PC-9 (cell line): ENCODE measurements at regions of chr11 and their contacts with region 1.

Region 1: DNA sequence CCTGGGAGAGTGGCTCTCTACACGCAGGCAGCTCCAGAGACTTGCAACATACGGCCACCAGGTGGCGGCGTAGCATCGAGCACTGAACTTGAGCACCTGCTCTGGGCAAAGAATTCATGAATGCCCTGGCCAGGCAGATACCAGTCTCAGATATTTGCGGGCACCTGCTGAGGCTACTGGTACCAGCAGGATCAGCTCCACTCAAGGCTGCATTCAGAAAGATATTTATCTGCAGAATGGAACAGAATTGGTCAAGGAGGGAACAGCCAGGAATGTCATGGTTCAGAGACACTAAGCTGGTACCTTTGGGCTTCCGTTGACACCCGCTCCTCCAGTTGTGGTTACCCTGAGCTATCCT is 10.8 kb upstream of the CCDC86 start:
- DNase-seq: peak; percentile 74 to 88
- H3K4me3 ChIP-seq: no peak overlapping the region
- H3K27ac ChIP-seq: no peak overlapping the region
- H3K4me1 ChIP-seq: 0 out of 2 replicates have a peak, but pooled peaks cover 3% of the 10 kb centered on the region
- H3K27me3 ChIP-seq: peaks cover 17% of the 10 kb centered on the region; the same call in 1 of the 2 replicates
- CTCF ChIP-seq: peak; percentile 99

Region 2: GRCh38 chr11:60775420-60775961 is 55.6 kb before region 1 on chr11:
- CTCF ChIA-PET with region 1: no interaction called
- POLR2A ChIA-PET with region 1: no interaction called
- intact Hi-C with region 1: loop called (anchors 5 kb)
- DNase-seq: peak; percentile 70 to 87
- H3K4me3 ChIP-seq: no peak overlapping the region
- H3K27ac ChIP-seq: no peak overlapping the region
- H3K4me1 ChIP-seq: no peaks in the 10 kb centered on the region
- H3K27me3 ChIP-seq: peaks cover 43% of the 10 kb centered on the region
- CTCF ChIP-seq: peak; percentile 90

Region 3: GRCh38 chr11:60860943-60861342 is 29.8 kb after region 1 on chr11:
- CTCF ChIA-PET with region 1: no interaction called
- POLR2A ChIA-PET with region 1: no interaction called
- intact Hi-C with region 1: no loop called
- DNase-seq: no peak
- H3K4me3 ChIP-seq: no peak overlapping the region
- H3K27ac ChIP-seq: no peak overlapping the region
- H3K4me1 ChIP-seq: no peaks in the 10 kb centered on the region
- H3K27me3 ChIP-seq: peaks cover 5% of the 10 kb centered on the region; the same call in 1 of the 2 replicates
- CTCF ChIP-seq: no peak

Region 4: DNA sequence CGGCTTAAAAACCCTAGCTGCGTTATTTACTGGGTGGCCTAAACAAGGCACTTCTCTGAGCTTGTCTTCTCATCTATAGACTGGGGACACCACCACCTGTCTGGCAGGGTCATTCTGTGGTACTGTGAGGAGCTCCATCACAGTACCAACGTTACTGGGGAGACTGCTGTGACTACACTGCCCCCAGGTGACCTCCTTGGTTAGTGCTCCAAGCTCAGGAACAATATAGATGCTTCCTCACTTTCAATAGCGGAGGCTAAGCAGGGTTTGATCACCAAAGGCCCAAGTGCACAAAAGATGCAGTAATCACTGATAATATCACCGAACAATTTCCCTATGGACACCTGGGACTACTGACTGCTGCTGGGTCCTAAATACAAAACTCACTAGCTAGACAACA is 56.4 kb after region 1 on chr11:
- CTCF ChIA-PET with region 1: interaction called, 21 read pairs
- POLR2A ChIA-PET with region 1: interaction called, 4 read pairs
- intact Hi-C with region 1: loop called (anchors 1 kb)
- DNase-seq: no peak
- H3K4me3 ChIP-seq: no peak overlapping the region
- H3K27ac ChIP-seq: no peak overlapping the region
- H3K4me1 ChIP-seq: no peaks in the 10 kb centered on the region
- H3K27me3 ChIP-seq: no peaks in the 10 kb centered on the region
- CTCF ChIP-seq: peak; percentile 67

Region 5: DNA sequence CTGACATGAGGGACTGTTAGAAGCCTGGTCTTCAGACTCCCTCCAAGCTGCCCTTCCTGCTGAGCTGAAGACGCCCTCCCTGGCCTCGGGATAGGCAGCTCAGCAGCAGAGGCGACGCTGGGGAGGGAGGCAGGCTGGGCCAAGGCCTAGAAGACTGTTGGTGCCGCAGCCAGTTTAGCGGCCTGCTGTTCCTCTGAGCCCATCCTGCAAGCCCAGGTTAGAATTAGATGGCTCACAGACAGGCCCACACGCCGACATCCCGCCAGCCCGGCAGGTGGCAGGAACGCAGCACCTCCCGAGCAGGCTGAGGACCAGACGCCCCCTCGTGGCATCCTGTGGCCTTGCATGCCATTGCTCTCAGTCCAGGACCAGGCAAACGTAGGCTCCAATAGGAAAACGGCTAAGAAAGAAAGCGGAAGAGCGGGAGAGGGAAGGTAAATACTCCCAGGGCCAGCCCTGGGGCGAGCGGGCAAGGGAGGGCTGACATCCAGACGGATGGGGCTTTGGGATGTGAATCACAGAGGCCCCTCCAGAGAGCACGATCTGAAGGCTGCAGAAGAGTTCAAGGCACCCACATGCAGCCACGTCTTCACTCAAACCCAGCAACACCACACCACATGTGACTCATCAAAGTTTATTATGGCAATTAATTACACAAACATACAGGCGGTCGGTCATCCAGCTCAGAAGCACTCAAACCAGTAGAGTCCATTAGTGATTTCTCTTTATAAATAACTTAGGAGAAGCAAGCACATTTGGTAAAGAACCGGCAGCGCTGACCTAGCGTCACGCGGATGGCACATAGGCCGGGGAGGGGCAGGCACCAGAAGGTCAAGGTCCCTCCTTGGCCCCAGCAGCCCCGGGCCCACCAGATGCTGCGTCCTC is 298.8 kb after region 1 on chr11:
- CTCF ChIA-PET with region 1: no interaction called
- POLR2A ChIA-PET with region 1: no interaction called
- intact Hi-C with region 1: loop called (anchors 1 kb)
- DNase-seq: peak; percentile 85 to 93
- H3K4me3 ChIP-seq: peak overlapping the region; percentile 37; the same call in 1 of the 2 replicates
- H3K27ac ChIP-seq: peak overlapping the region; percentile 40
- H3K4me1 ChIP-seq: peaks cover 19% of the 10 kb centered on the region
- H3K27me3 ChIP-seq: no peaks in the 10 kb centered on the region
- CTCF ChIP-seq: peak; percentile 100

Region 6: GRCh38 chr11:61161190-61162091 is 330.3 kb after region 1 on chr11 and contains the start of gene VPS37C:
- CTCF ChIA-PET with region 1: no interaction called
- POLR2A ChIA-PET with region 1: no interaction called
- intact Hi-C with region 1: no loop called
- DNase-seq: peak; percentile 76 to 96
- H3K4me3 ChIP-seq: peak within 1 kb of the TSS; percentile 66
- H3K27ac ChIP-seq: peak within 1 kb of the TSS; percentile 81
- H3K4me1 ChIP-seq: peaks cover 67% of the 10 kb centered on the region
- H3K27me3 ChIP-seq: no peaks in the 10 kb centered on the region
- CTCF ChIP-seq: no peak; the same call in 1 of the 2 replicates
- total RNA-seq, gene VPS37C: 27.1 and 29.0 TPM in 2 replicates

Region 7: DNA sequence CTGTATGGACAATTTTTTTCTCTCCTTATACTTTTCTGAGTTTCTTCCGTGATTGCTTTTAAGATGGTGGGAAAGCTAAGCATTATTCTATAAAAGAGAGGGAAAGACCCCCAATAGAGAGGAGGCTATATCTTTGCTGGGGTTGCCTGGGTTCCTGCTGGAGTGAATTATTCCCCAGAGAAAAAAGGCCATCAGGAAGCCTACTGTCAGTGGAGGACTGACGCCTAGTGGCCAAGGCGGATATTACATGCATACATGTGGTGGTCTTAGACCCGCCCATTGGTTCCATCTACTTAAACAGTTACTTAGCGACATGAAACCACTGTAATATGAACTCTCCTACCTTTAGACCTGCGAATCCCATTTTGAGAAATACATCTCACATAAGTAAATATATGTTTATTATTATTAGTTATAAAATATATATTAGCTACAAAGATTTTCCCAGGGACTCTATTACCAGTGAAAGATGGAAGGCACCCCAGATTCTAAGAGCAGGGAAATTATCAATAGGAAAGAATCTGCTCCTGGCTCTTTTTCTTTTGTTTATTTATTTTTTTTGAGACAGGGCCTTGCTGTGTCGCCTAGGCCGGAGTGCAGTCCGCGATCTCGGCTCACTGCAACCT is 356.5 kb after region 1 on chr11:
- CTCF ChIA-PET with region 1: interaction called, 5 read pairs
- POLR2A ChIA-PET with region 1: no interaction called
- intact Hi-C with region 1: loop called (anchors 1 kb)
- DNase-seq: peak; percentile 56 to 70
- H3K4me3 ChIP-seq: no peak overlapping the region
- H3K27ac ChIP-seq: no peak overlapping the region
- H3K4me1 ChIP-seq: no peaks in the 10 kb centered on the region
- H3K27me3 ChIP-seq: peaks cover 26% of the 10 kb centered on the region
- CTCF ChIP-seq: peak; percentile 99